Right ventricle myocardium inferior (tissue), 1 donor: ENCODE measurements at regions of chr15 and their contacts with region 1.

Region 1: DNA sequence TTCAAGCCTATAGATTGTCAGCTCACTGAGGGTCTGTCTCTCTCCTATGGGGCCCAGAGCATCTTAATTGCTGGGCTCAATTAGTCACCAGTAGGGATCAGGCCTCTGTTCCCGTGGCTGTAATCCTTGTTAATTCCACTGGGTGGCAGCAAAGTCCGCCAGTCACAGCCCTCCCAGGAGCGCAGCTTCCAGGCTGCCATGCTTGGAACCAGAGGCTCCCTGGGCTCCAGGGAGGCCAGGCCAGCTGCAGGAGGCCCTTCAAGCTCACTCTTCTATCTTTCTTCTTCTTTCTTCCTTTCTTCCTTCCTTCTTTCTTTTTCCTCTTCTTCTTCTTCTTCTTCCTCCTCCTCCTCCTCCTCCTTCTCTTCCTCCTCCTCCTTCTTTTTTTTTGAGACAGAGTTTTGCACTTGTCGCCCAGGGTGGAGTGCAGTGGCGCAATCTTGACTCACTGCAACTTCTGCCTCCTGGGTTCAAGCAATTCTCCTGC is 14.4 kb downstream of the RNU5B-1 start:
- DNase-seq: peak; percentile 81
- ATAC-seq: peak; percentile 90

Region 2: GRCh38 chr15:65384895-65385858 is 66.3 kb after region 1 on chr15:
- intact Hi-C with region 1: loop called (anchors 1 kb)
- DNase-seq: peak; percentile 92
- ATAC-seq: peak; percentile 93

Region 3: DNA sequence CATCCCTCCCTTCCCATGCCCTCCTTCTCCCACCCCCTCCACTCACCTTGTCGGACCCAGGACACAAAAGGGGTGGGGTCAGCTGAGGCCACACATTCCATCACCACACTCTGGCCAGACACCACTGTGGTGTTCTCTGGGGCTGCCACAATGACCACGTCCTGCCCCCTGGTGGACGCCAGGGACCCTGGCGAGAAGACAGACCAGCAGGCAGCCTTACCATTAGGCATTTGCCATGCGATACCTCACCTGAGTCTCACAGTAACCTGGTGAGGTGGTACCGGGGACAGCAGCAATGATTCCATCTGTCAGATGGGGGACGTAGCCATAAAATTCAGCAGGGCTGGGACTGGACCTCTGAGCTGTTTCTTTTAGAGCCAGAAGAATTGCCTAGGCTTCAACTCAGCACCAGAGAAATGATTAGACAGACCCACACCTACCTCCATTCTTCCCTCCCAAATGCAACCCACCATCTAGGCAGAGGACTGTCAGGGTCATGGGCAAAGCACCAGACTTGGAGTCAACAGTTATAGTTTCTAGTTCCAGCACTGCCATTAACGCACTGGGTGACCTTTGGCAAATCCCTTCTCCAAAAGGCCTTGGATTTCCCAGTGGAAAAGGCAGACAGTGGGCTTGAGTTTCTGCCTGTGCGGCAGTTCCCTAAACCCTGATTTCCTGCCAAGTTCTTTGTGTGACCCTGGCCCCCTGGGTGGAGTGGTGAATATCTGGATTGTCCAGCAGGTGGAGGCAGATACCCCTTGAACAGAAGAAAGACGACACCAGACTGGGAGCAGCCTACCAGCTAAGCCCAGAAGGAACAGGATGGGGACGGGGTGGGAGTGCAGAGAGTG is 82.1 kb after region 1 on chr15:
- intact Hi-C with region 1: loop called (anchors 5 kb)
- DNase-seq: peak; percentile 79
- ATAC-seq: peak; percentile 82